GM12878 (cell line): ENCODE measurements at regions of chr1 and their contacts with region 1.

Region 1: DNA sequence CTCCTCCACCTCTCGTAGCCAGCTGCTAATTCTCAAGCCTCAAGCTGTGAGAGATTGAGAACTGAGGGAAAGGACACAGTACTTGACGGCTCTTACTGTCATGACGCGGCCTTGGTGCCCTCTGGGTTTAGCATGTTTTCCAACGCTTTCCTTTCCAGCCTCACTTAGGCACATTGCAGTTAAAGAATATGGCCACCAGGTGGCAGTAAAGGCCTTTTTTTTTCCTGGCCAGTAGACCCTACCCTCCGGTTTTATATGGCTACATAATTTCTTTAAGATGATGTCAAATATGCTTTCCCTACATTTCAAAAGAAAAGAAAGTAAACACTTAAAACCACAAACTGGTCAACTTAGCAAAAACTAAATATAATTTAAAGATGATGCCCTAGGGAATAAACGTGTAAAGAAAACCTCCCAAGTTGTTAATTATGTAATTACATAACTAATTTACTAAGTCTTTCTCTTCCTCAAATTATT is 56.8 kb upstream of the PRDX6 start:
- DNase-seq: no peak
- ATAC-seq: peak; percentile 26
- H3K4me3 ChIP-seq: no peak overlapping the region
- H3K27ac ChIP-seq: no peak overlapping the region
- H3K4me1 ChIP-seq: peaks cover 39% of the 10 kb centered on the region
- H3K27me3 ChIP-seq: no peaks in the 10 kb centered on the region
- CTCF ChIP-seq: peak; percentile 68 to 80 (median 73)
- EP300 ChIP-seq: no peak
- POLR2A ChIP-seq: no peak
- RAD21 ChIP-seq: peak; percentile 90

Region 2: DNA sequence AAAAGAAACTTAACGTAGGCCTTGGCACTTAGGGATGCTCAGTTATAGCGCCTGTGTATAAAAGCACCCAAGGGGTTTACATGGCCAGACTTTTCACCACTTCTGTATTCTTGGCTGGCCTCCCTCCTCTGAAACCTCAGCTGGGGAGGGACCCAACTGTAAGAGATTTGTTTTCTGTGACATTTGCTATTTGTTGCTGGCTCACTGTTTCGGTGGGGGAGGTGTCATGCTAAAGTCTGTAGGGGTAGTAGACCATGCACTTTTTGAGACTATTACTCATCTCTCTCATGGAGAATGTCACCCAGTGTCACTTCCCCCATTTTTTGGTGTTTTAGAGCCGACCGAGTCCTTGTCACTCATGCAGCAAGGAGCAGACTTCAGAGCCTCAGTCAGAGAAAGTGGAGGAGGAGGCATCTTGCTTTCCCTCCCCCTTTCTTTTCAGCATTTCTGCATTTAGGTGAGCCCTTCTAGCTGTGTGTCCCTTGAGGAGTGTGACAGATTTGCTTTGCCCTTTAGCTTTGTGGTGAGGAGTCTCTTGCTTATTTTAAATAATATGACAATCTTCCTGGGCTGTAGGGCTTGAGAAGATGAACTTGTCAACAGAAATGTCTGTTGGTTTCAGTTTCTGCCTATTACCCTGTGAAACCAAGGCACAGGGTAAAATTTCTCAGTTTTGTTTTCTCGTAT is 601.4 kb before region 1 on chr1:
- CTCF ChIA-PET with region 1: interaction called, 4 read pairs
- POLR2A ChIA-PET with region 1: interaction called, 3 read pairs
- RAD21 ChIA-PET with region 1: interaction called, 11 read pairs
- SMC1A ChIA-PET with region 1: interaction called, 5 read pairs
- in situ Hi-C with region 1: loop called (anchors 5 kb)
- intact Hi-C with region 1: loop called (anchors 2 kb)
- DNase-seq: peak; percentile 99
- ATAC-seq: peak; percentile 95
- H3K4me3 ChIP-seq: no peak overlapping the region; the same call in 1 of the 2 replicates
- H3K27ac ChIP-seq: peak overlapping the region; percentile 73
- H3K4me1 ChIP-seq: peaks cover 32% of the 10 kb centered on the region
- H3K27me3 ChIP-seq: no peaks in the 10 kb centered on the region
- CTCF ChIP-seq: no peak
- EP300 ChIP-seq: peak; percentile 91 to 92
- POLR2A ChIP-seq: no peak
- RAD21 ChIP-seq: peak; percentile 23; the same call in 1 of the 2 replicates

Region 3: GRCh38 chr1:173212952-173213491 is 207.3 kb before region 1 on chr1:
- CTCF ChIA-PET with region 1: interaction called, 10 read pairs
- POLR2A ChIA-PET with region 1: interaction called, 5 read pairs
- RAD21 ChIA-PET with region 1: interaction called, 105 read pairs
- SMC1A ChIA-PET with region 1: interaction called, 348 read pairs
- in situ Hi-C with region 1: no loop called
- intact Hi-C with region 1: no loop called
- DNase-seq: peak; percentile 90
- ATAC-seq: peak; percentile 91
- H3K4me3 ChIP-seq: no peak overlapping the region
- H3K27ac ChIP-seq: no peak overlapping the region
- H3K4me1 ChIP-seq: peaks cover 5% of the 10 kb centered on the region
- H3K27me3 ChIP-seq: no peaks in the 10 kb centered on the region
- CTCF ChIP-seq: no peak
- EP300 ChIP-seq: peak; percentile 58 to 92; a peak in 3 of 4 replicates
- POLR2A ChIP-seq: no peak
- RAD21 ChIP-seq: 0 out of 2 replicates have a peak, but pooled peaks have one; percentile 13

Region 4: GRCh38 chr1:173255214-173255813 is 165.1 kb before region 1 on chr1:
- CTCF ChIA-PET with region 1: interaction called, 20 read pairs
- POLR2A ChIA-PET with region 1: no interaction called
- RAD21 ChIA-PET with region 1: interaction called, 11 read pairs
- SMC1A ChIA-PET with region 1: interaction called, 30 read pairs
- in situ Hi-C with region 1: no loop called
- intact Hi-C with region 1: loop called (anchors 2 kb)
- DNase-seq: peak; percentile 16
- ATAC-seq: peak; percentile 67
- H3K4me3 ChIP-seq: no peak overlapping the region
- H3K27ac ChIP-seq: no peak overlapping the region
- H3K4me1 ChIP-seq: peaks cover 4% of the 10 kb centered on the region; the same call in 1 of the 2 replicates
- H3K27me3 ChIP-seq: no peaks in the 10 kb centered on the region
- CTCF ChIP-seq: peak; percentile 67 to 80 (median 70)
- EP300 ChIP-seq: no peak
- POLR2A ChIP-seq: no peak
- RAD21 ChIP-seq: peak; percentile 68

Region 5: GRCh38 chr1:173409613-173410012 is 10.8 kb before region 1 on chr1:
- CTCF ChIA-PET with region 1: interaction called, 21 read pairs
- POLR2A ChIA-PET with region 1: interaction called, 4 read pairs
- RAD21 ChIA-PET with region 1: interaction called, 36 read pairs
- SMC1A ChIA-PET with region 1: interaction called, 10 read pairs
- in situ Hi-C with region 1: no loop called
- intact Hi-C with region 1: no loop called
- DNase-seq: no peak
- ATAC-seq: peak; percentile 17
- H3K4me3 ChIP-seq: peak overlapping the region; percentile 35; the same call in 1 of the 2 replicates
- H3K27ac ChIP-seq: peak overlapping the region; percentile 98
- H3K4me1 ChIP-seq: peaks cover 65% of the 10 kb centered on the region
- H3K27me3 ChIP-seq: no peaks in the 10 kb centered on the region
- CTCF ChIP-seq: no peak
- EP300 ChIP-seq: peak in 1 of 2 experiments; percentile 29; a peak in 1 of 4 replicates
- POLR2A ChIP-seq: no peak
- RAD21 ChIP-seq: no peak

Region 6: DNA sequence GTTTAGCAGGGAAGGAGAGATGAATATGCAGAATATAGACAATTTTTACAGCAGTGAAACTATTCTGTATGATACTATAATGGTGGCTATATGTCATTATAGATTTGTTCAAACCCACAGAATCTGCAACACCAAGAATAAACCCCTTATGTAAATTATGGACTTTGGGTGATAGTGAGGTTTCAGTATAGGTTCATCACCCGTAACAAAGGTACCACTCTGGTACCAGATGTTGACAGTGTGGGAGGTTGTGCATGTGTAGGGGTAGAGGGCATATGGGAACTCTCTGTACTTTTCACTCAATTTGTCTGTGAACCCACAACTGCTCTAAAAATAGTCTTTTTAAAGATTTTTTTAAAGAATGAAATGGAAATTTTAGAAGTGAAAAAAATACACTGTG is 26.9 kb after region 1 on chr1:
- CTCF ChIA-PET with region 1: no interaction called
- POLR2A ChIA-PET with region 1: no interaction called
- RAD21 ChIA-PET with region 1: no interaction called
- SMC1A ChIA-PET with region 1: no interaction called
- in situ Hi-C with region 1: no loop called
- intact Hi-C with region 1: no loop called
- DNase-seq: no peak
- ATAC-seq: peak; percentile 58
- H3K4me3 ChIP-seq: no peak overlapping the region
- H3K27ac ChIP-seq: no peak overlapping the region
- H3K4me1 ChIP-seq: peaks cover 18% of the 10 kb centered on the region
- H3K27me3 ChIP-seq: no peaks in the 10 kb centered on the region
- CTCF ChIP-seq: no peak
- EP300 ChIP-seq: no peak
- POLR2A ChIP-seq: no peak
- RAD21 ChIP-seq: no peak

Region 7: DNA sequence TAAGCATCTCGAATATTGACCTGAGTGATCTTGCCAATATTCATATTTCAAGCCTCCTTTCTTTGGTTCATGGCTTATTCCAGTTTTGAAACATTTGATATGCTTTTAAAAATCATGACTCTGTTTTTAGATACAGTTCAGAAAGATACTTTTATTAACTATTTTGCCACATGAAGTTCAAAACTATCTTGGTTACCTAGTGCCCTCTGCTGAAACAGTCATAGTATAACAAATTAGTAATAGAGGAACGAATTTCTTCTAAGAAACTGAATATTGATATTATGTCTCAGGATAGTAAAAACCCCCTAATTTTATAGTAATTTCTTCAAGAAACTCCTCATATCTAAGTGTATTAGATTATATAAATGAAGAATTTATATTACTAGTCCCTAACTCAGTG is 654.4 kb after region 1 on chr1:
- CTCF ChIA-PET with region 1: no interaction called
- POLR2A ChIA-PET with region 1: no interaction called
- RAD21 ChIA-PET with region 1: no interaction called
- SMC1A ChIA-PET with region 1: no interaction called
- in situ Hi-C with region 1: no loop called
- intact Hi-C with region 1: loop called (anchors 5 kb)
- DNase-seq: no peak
- ATAC-seq: no peak
- H3K4me3 ChIP-seq: no peak overlapping the region
- H3K27ac ChIP-seq: no peak overlapping the region
- H3K4me1 ChIP-seq: no peaks in the 10 kb centered on the region
- H3K27me3 ChIP-seq: no peaks in the 10 kb centered on the region
- CTCF ChIP-seq: peak in 1 of 3 experiments; percentile 11; a peak in 3 of 6 replicates
- EP300 ChIP-seq: no peak
- POLR2A ChIP-seq: no peak
- RAD21 ChIP-seq: peak; percentile 60